Heart left ventricle (tissue), 16 donors: ENCODE measurements at regions of chr6 and their contacts with region 1.

Region 1: DNA sequence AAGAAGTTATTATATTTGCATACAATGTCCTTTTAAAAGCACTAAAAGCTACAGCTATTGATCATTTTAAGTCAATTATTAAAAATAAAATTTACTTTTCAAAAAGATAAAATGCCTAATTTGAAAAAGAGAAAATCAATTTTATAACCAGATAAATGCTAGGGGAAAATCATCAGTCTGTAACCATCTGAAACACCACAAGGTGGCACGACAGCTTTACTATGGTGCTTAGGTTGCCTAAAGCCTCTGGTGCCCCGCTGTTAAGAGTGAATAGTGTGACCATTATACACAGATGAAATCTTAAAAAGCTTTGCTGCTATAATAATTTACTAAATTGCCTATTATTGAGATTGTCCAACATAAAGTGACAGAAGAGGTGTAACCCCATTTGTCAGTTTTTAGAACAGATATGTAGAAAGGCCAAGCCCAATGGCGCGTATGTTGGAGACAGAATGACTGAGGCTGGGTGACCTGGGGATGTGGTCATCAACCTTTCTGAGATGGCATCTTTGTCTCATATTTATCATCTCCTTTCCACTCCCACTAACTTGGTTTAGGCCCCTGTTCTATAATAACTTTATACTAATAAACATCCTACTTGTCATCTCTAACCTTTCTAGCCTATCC is 100.8 kb downstream of the MOXD1 start:
- DNase-seq: peak in 1 of 5 donors; percentile 39
- ATAC-seq: peak in 3 of 4 donors; percentile 69 to 78 (median 70)
- H3K4me3 ChIP-seq: no peak overlapping the region
- H3K27ac ChIP-seq: no peak overlapping the region
- H3K4me1 ChIP-seq: no peaks in the 10 kb centered on the region
- H3K27me3 ChIP-seq: no peaks in the 10 kb centered on the region
- CTCF ChIP-seq: peak; percentile 39 to 69 (median 50)
- POLR2A ChIP-seq: no peak

Region 2: GRCh38 chr6:131519670-131520436 is 780.6 kb before region 1 on chr6:
- intact Hi-C with region 1: no loop called
- DNase-seq: no peak
- ATAC-seq: no peak
- H3K4me3 ChIP-seq: no peak overlapping the region
- H3K27ac ChIP-seq: no peak overlapping the region
- H3K4me1 ChIP-seq: no peaks in the 10 kb centered on the region
- H3K27me3 ChIP-seq: no peaks in the 10 kb centered on the region
- CTCF ChIP-seq: peak in 10 of 12 donors; percentile 11 to 45 (median 29)
- POLR2A ChIP-seq: no peak

Region 3: GRCh38 chr6:132380358-132381029 is 80.1 kb after region 1 on chr6:
- intact Hi-C with region 1: no loop called
- DNase-seq: no peak
- ATAC-seq: no peak
- H3K4me3 ChIP-seq: no peak overlapping the region
- H3K27ac ChIP-seq: no peak overlapping the region
- H3K4me1 ChIP-seq: peaks cover 0 to 3% (median 0%) of the 10 kb centered on the region in 12 donors
- H3K27me3 ChIP-seq: no peaks in the 10 kb centered on the region
- CTCF ChIP-seq: no peak
- POLR2A ChIP-seq: no peak

Region 4: GRCh38 chr6:132456700-132457143 is 156.3 kb after region 1 on chr6:
- intact Hi-C with region 1: loop called in 1 of 10 experiments (anchors 10 kb)
- DNase-seq: peak; percentile 39 to 74 (median 72)
- ATAC-seq: peak; percentile 94 to 98 (median 96)
- H3K4me3 ChIP-seq: no peak overlapping the region
- H3K27ac ChIP-seq: peak overlapping the region in 2 of 12 donors; percentile 14 to 22
- H3K4me1 ChIP-seq: peaks cover 0 to 12% (median 0%) of the 10 kb centered on the region in 12 donors
- H3K27me3 ChIP-seq: no peaks in the 10 kb centered on the region
- CTCF ChIP-seq: peak in 8 of 12 donors; percentile 9 to 47 (median 28)
- POLR2A ChIP-seq: no peak

Region 5: DNA sequence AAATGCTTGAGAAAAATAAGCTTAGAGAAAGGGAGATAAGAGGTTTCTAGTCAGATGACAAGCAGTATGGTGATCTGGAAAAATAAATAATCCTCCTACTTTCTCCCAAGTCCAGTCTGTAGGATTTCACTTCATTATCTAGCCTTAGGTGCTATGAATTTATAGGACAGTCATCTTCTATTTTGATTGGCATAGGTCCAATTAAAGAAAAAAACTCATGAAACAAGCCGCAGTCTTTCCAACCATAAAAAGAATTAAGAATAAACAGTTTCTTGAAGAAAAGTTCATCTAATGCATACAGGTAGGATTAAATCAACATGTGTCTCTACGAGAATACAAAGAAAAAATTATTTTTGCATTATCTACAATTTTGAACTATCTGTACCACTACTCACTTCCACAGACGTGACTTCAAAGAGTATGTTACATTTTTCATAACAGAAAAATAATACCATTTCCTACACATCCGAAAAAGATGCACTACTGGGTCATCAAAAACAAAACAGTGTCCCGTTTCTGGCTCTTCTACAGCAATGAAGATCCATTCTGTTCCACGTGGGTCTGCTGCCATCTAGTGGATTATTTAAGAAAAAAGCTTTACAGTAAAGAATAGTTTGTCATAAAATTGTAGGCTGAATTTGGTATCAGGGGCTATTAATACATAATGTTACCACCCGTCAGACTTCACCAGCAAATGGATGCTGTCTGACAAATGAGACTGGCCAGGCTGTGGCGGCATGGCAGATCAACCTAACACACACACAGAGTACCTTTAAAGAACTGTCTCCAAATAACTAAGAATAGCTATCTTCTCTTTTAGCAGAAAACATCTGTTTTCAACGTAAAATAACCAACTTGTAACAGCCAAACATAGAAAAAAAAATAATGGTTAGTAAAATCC is 183.6 kb after region 1 on chr6:
- intact Hi-C with region 1: loop called in 9 of 10 experiments (anchors 1 to 5 kb)
- DNase-seq: peak in 2 of 5 donors; percentile 29 to 42
- ATAC-seq: peak in 3 of 4 donors; percentile 65 to 79 (median 72)
- H3K4me3 ChIP-seq: no peak overlapping the region
- H3K27ac ChIP-seq: no peak overlapping the region
- H3K4me1 ChIP-seq: peaks cover 0 to 33% (median 18%) of the 10 kb centered on the region in 12 donors
- H3K27me3 ChIP-seq: no peaks in the 10 kb centered on the region
- CTCF ChIP-seq: peak; percentile 60 to 83 (median 76)
- POLR2A ChIP-seq: no peak

Region 6: GRCh38 chr6:132811276-132811675 is 510.8 kb after region 1 on chr6:
- intact Hi-C with region 1: no loop called
- DNase-seq: no peak
- ATAC-seq: no peak
- H3K4me3 ChIP-seq: no peak overlapping the region
- H3K27ac ChIP-seq: no peak overlapping the region
- H3K4me1 ChIP-seq: peaks cover 0 to 23% (median 13%) of the 10 kb centered on the region in 12 donors
- H3K27me3 ChIP-seq: no peaks in the 10 kb centered on the region
- CTCF ChIP-seq: no peak
- POLR2A ChIP-seq: no peak